ENCODE measurements at regions of chr17 and their contacts with region 1.

Region 1: GRCh38 chr17:69327060-69327831 is at the start of gene ABCA5:
- DNase-seq: peak; percentile 79
- ATAC-seq: peak; percentile 94
- H3K4me3 ChIP-seq: peak within 1 kb of the TSS; percentile 57
- H3K27ac ChIP-seq: no peak within 1 kb of the TSS
- H3K4me1 ChIP-seq: no peaks in the 10 kb centered on the region; the same call in 1 of the 2 replicates
- H3K27me3 ChIP-seq: no peaks in the 10 kb centered on the region; the same call in none of the 2 replicates
- CTCF ChIP-seq: no peak
- POLR2A ChIP-seq: no peak
- RAD21 ChIP-seq: no peak
- total RNA-seq, gene ABCA5: 2.3 and 3.6 TPM in 2 replicates

Region 2: GRCh38 chr17:68954863-68955841 is 372.1 kb before region 1 on chr17 and contains the start of gene ABCA8:
- CTCF ChIA-PET with region 1: no interaction called
- POLR2A ChIA-PET with region 1: no interaction called
- dilution Hi-C with region 1: no loop called
- in situ Hi-C with region 1: no loop called
- intact Hi-C with region 1: no loop called
- DNase-seq: peak; percentile 58
- ATAC-seq: peak; percentile 73
- H3K4me3 ChIP-seq: peak within 1 kb of the TSS; percentile 46; the same call in 1 of the 2 replicates
- H3K27ac ChIP-seq: peak within 1 kb of the TSS; percentile 85; the same call in 1 of the 2 replicates
- H3K4me1 ChIP-seq: no peaks in the 10 kb centered on the region; the same call in 1 of the 2 replicates
- H3K27me3 ChIP-seq: no peaks in the 10 kb centered on the region
- CTCF ChIP-seq: no peak
- POLR2A ChIP-seq: no peak
- RAD21 ChIP-seq: no peak
- total RNA-seq, gene ABCA8: 1.8 and 2.8 TPM in 2 replicates

Region 3: DNA sequence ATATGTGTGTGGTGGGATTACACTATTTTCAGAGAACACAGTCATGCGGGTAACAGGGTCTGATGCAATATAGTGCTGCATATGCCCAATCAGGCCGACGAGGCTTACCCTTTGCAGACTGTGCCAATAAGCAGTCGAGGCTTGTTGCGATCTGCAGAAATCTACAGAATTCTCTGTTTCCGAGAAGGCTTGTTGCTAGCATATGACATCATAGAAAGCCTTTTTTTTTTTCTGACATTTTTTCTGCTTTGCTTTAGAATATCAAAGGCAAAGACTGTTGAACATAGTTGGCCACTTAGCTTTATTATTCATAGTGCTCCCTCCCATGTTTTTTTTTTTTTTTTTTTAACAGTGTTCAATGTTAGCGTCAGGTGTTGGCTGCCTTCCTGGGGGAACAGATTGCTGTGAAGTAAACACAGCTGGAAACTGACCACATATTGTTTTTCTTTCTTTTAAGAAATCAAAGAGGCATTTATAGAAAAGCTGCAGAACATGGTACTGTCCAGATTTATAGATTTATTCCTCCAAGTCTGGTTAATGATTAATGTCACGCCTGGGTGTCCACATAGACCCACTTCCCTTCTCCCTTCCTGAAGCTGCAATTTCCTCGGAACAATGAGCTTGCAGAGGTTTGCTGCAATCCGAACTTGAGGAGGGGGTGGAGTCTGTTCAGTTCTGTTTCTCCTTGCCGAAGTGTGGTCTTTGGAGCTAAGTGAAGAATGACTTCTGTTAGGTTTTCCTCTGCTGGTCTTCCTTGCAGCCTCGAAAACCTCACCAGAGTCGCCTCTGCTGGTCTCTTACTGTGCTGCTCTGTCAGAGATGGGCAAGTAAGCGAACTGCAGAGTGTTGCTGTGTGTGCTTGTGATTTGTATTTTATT is 174.6 kb after region 1 on chr17:
- CTCF ChIA-PET with region 1: no interaction called
- POLR2A ChIA-PET with region 1: no interaction called
- dilution Hi-C with region 1: no loop called
- in situ Hi-C with region 1: no loop called
- intact Hi-C with region 1: loop called (anchors 2 kb)
- DNase-seq: peak; percentile 90
- ATAC-seq: peak; percentile 72
- H3K4me3 ChIP-seq: peak overlapping the region; percentile 2; the same call in 1 of the 2 replicates
- H3K27ac ChIP-seq: peak overlapping the region; percentile 71; the same call in 1 of the 2 replicates
- H3K4me1 ChIP-seq: peaks cover 8% of the 10 kb centered on the region; the same call in 1 of the 2 replicates
- H3K27me3 ChIP-seq: no peaks in the 10 kb centered on the region
- CTCF ChIP-seq: no peak
- POLR2A ChIP-seq: no peak
- RAD21 ChIP-seq: no peak

Region 4: DNA sequence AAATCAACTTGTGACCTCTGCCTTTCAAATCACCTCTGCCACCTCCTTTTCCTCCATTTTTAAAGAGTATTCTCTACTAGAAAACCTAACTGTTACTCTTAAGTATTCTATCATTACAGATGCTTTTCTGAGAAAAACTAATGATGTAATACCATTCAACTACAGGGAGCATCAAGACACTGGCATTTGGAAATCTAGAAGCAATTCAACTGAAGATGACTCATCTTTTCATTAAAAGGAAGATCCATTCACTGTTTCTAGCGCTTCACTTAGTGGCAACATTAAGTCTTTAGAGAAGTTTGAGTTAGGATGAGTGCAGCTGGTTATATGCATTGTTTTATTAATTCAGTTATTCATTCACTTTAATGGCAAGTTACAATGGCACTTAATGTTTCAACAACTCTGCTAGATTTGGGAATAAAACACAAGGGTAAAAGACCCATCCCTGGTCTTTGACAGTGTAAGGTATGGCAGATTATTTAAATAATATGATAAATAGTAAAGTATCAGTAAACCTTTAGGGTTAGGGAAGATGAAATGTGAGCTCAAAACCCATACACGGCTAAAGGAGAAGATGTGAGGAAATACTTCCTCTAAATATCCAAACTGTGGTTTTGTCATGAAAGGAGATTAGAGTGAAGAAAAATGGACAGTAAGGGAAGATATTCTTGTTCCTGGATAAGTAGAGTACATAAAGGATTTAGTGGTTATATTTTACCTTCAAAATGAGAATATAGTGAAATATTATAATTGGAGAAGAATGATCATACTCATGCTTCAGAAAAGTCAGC is 903.8 kb after region 1 on chr17:
- CTCF ChIA-PET with region 1: no interaction called
- POLR2A ChIA-PET with region 1: no interaction called
- dilution Hi-C with region 1: no loop called
- in situ Hi-C with region 1: no loop called
- intact Hi-C with region 1: no loop called
- DNase-seq: no peak
- ATAC-seq: no peak
- H3K4me3 ChIP-seq: no peak overlapping the region
- H3K27ac ChIP-seq: no peak overlapping the region
- H3K4me1 ChIP-seq: no peaks in the 10 kb centered on the region; the same call in 1 of the 2 replicates
- H3K27me3 ChIP-seq: no peaks in the 10 kb centered on the region
- CTCF ChIP-seq: no peak
- POLR2A ChIP-seq: no peak
- RAD21 ChIP-seq: no peak

Measured in IMR-90 (cell line).